A549 (cell line): ENCODE measurements at regions of chr9 and their contacts with region 1.

Region 1: DNA sequence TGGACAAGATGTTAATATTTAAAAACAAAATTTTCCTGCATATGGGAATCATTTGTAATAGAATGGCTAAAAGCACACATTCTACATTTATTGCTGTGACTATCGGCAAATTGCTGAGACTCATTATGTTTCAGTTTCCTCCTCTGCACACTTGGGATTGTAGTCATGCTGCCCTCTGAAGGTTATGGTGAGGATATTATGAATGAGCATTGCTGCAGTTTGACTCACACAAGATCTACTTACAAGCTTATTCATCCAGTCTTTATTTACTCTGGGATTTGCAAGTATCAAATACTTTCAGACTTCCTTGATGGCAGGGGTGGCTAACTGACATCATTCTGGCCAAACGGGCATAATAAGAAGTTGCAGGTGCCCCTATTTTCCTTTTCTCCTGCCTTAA is 9.5 kb upstream of the NFIL3 start:
- DNase-seq: peak; percentile 68 to 91
- ATAC-seq: peak; percentile 99
- H3K4me3 ChIP-seq: no peak overlapping the region
- H3K27ac ChIP-seq: peak overlapping the region; percentile 26 to 33; a peak in 3 of 6 replicates
- H3K4me1 ChIP-seq: peaks cover 14% of the 10 kb centered on the region
- CTCF ChIP-seq: peak; percentile 66
- EP300 ChIP-seq: 0 out of 5 replicates have a peak, but pooled peaks of 1 of the 2 experiments have one; percentile 25
- POLR2A ChIP-seq: no peak
- RAD21 ChIP-seq: peak; percentile 80 to 85

Region 2: DNA sequence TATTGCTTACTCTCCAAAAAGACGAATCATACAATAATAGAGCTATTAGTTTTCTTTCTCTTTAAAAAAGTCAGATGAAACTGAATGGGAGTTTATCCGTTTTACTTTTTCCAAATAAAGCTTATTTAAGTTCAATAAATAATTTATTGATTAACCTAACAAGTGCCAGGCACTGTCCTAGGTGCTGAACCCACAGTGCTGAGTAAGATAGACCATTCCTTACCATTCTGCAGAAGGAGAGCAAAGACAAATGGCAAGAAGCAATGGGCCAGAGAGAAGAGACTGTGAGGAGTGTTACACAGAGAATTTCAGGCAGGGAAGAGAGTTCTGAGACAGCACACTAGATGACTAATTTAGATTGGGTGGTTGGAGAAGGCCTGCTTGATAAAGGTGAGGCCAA is 198.7 kb before region 1 on chr9:
- CTCF ChIA-PET with region 1: no interaction called
- POLR2A ChIA-PET with region 1: no interaction called
- DNase-seq: no peak
- ATAC-seq: no peak
- H3K4me3 ChIP-seq: no peak overlapping the region
- H3K27ac ChIP-seq: no peak overlapping the region
- H3K4me1 ChIP-seq: no peaks in the 10 kb centered on the region
- CTCF ChIP-seq: no peak
- EP300 ChIP-seq: no peak
- POLR2A ChIP-seq: no peak
- RAD21 ChIP-seq: no peak

Region 3: DNA sequence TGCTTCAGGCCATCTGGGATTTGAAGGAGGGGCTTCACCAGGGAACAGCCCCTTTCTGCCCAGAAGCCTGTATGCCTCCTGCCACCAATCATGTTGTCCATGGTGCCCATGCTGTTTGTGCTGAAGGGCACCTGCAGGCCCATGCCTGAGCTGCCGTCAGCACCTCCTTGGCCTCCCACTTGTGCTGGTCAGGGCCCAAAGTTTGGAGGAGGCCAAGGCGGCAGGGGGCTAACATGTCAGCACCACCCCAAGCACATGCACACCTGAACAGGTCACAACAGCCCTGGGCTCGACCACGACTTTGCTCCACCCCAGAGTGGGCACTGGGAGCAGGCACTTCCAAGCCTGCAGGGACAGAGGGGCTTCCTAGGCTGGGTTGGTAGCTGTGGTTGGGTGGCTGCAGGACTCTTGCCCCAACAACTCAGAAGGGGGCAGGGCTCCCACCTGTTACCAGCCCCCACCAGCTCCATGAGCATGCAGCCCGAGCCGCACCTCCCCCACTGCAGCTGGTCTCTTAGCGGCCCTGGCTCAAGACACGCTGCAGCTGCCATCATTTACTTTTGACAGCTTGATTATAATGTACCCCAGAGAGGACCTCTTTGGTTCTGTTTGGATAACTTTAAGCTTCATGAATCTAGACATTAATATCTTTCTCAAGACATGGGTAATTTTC is 10.3 kb after region 1 on chr9:
- CTCF ChIA-PET with region 1: interaction called, 26 read pairs
- POLR2A ChIA-PET with region 1: no interaction called
- DNase-seq: no peak
- ATAC-seq: no peak
- H3K4me3 ChIP-seq: no peak overlapping the region
- H3K27ac ChIP-seq: no peak overlapping the region
- H3K4me1 ChIP-seq: no peaks in the 10 kb centered on the region
- CTCF ChIP-seq: no peak
- EP300 ChIP-seq: no peak
- POLR2A ChIP-seq: no peak
- RAD21 ChIP-seq: no peak